ENCODE measurements at regions of chr15 and their contacts with region 1.

Region 1: DNA sequence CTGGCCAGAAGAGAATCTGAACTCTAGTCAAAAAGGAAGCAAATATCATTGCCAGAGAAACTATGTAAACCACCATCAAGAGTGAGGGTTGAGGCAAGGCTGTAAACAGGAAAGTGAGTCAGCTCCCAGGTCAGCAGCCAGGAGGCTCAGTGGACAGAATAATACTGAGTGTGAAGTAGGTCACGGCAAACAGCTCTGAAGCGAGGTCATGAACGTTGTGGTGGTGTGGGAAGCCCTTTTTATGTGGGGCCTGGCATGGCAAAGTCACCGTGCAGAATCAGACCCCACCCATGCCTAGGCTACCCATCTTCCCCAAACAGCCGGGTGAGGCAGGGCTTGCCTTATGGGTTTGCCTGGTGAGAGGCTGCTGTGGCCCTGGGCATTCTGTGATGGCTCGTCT is 43.9 kb downstream of the THBS1 start:
- DNase-seq: peak; percentile 68
- H3K4me3 Mint-ChIP-seq: peak overlapping the region; percentile 67
- H3K27ac Mint-ChIP-seq: peak overlapping the region; percentile 99
- H3K4me1 Mint-ChIP-seq: peaks cover 75% of the 10 kb centered on the region
- H3K27me3 Mint-ChIP-seq: no peaks in the 10 kb centered on the region

Region 2: GRCh38 chr15:38536201-38536676 is 1088.6 kb before region 1 on chr15:
- intact Hi-C with region 1: loop called (anchors 10 kb)
- DNase-seq: no peak
- H3K4me3 Mint-ChIP-seq: no peak overlapping the region
- H3K27ac Mint-ChIP-seq: peak overlapping the region; percentile 78
- H3K4me1 Mint-ChIP-seq: peaks cover 90% of the 10 kb centered on the region
- H3K27me3 Mint-ChIP-seq: no peaks in the 10 kb centered on the region

Region 3: GRCh38 chr15:38690689-38691332 is 934.0 kb before region 1 on chr15:
- intact Hi-C with region 1: loop called (anchors 5 kb)
- DNase-seq: peak; percentile 75
- H3K4me3 Mint-ChIP-seq: no peak overlapping the region
- H3K27ac Mint-ChIP-seq: peak overlapping the region; percentile 29
- H3K4me1 Mint-ChIP-seq: peaks cover 77% of the 10 kb centered on the region
- H3K27me3 Mint-ChIP-seq: no peaks in the 10 kb centered on the region

Region 4: GRCh38 chr15:39426552-39427532 is 198.0 kb before region 1 on chr15:
- intact Hi-C with region 1: loop called (anchors 5 kb)
- DNase-seq: peak; percentile 68
- H3K4me3 Mint-ChIP-seq: peak overlapping the region; percentile 22
- H3K27ac Mint-ChIP-seq: no peak overlapping the region
- H3K4me1 Mint-ChIP-seq: peaks cover 26% of the 10 kb centered on the region
- H3K27me3 Mint-ChIP-seq: peaks cover 33% of the 10 kb centered on the region

Region 5: DNA sequence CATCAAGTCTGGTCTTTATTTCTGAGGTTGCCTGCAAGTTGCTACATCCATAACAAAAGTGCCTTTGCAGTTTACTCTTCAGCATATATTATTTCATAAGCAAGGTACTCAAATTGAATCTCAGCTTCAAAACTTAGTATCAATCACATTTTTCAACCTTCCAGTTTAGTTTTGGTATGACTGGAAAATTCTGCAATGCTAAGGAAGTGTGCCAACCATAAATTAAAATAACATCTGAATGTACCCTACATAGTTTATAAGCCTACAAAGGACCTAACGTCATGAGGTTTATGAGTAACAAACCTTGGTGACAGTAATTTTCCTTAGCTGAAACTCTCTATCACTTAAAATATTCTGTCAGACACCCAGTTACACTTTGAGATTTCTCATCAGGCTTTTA is 18.9 kb after region 1 on chr15:
- intact Hi-C with region 1: loop called (anchors 1 kb)
- DNase-seq: no peak
- H3K4me3 Mint-ChIP-seq: no peak overlapping the region
- H3K27ac Mint-ChIP-seq: no peak overlapping the region
- H3K4me1 Mint-ChIP-seq: peaks cover 29% of the 10 kb centered on the region
- H3K27me3 Mint-ChIP-seq: peaks cover 8% of the 10 kb centered on the region

Region 6: DNA sequence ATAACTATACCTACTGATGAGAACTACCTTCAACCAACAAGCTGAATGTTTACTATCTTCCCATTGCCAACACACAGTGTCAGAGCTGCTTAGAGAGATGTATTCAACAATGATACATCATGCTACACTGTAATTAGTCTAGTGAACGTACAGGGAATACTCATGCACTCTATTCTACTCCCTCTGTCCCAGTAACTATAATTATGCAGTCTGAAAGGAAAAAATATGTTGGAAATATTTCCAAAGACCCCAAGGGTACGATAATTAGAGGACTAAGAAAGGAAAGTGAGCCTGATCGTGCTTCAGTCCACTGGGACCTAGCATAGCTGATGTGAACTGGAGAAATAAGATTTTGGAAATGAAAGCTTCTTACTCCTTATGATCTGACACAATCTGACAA is 194.7 kb after region 1 on chr15:
- intact Hi-C with region 1: no loop called
- DNase-seq: no peak
- H3K4me3 Mint-ChIP-seq: no peak overlapping the region
- H3K27ac Mint-ChIP-seq: no peak overlapping the region
- H3K4me1 Mint-ChIP-seq: no peaks in the 10 kb centered on the region
- H3K27me3 Mint-ChIP-seq: peaks cover 20% of the 10 kb centered on the region

Region 7: GRCh38 chr15:39920510-39921273 is 295.9 kb after region 1 on chr15:
- intact Hi-C with region 1: loop called (anchors 10 kb)
- DNase-seq: peak; percentile 65
- H3K4me3 Mint-ChIP-seq: peak overlapping the region; percentile 82
- H3K27ac Mint-ChIP-seq: peak overlapping the region; percentile 73
- H3K4me1 Mint-ChIP-seq: peaks cover 30% of the 10 kb centered on the region
- H3K27me3 Mint-ChIP-seq: peaks cover 36% of the 10 kb centered on the region